ENCODE measurements at regions of chr3 and their contacts with region 1.

Region 1: GRCh38 chr3:132722164-132723024 is at the start of gene NPHP3:
- DNase-seq: peak; percentile 96 to 98
- ATAC-seq: peak; percentile 84 to 87
- H3K4me3 ChIP-seq: peak within 1 kb of the TSS; percentile 77 to 99 (median 88)
- H3K27ac ChIP-seq: peak within 1 kb of the TSS; percentile 83 to 100 (median 94)
- H3K4me1 ChIP-seq: peaks cover 21 to 33% of the 10 kb centered on the region in 2 donors
- H3K27me3 ChIP-seq: no peaks in the 10 kb centered on the region
- CTCF ChIP-seq: peak in 3 of 5 experiments; percentile 12 to 43 (median 19)
- POLR2A ChIP-seq: peak; percentile 87 to 91
- total RNA-seq, gene NPHP3: 6.3 to 13.4 (median 10.6) TPM

Region 2: GRCh38 chr3:131381444-131382291 is 1340.7 kb before region 1 on chr3 and contains the start of gene NUDT16:
- in situ Hi-C with region 1: no loop called
- intact Hi-C with region 1: loop called (anchors 5 kb)
- DNase-seq: peak; percentile 100
- ATAC-seq: peak; percentile 93 to 94
- H3K4me3 ChIP-seq: peak within 1 kb of the TSS; percentile 83 to 97 (median 92)
- H3K27ac ChIP-seq: peak within 1 kb of the TSS; percentile 90 to 94 (median 92)
- H3K4me1 ChIP-seq: peaks cover 28 to 43% of the 10 kb centered on the region in 2 donors
- H3K27me3 ChIP-seq: no peaks in the 10 kb centered on the region
- CTCF ChIP-seq: no peak
- POLR2A ChIP-seq: peak; percentile 82 to 87
- total RNA-seq, gene NUDT16: 10.0 to 18.3 (median 14.4) TPM

Region 3: DNA sequence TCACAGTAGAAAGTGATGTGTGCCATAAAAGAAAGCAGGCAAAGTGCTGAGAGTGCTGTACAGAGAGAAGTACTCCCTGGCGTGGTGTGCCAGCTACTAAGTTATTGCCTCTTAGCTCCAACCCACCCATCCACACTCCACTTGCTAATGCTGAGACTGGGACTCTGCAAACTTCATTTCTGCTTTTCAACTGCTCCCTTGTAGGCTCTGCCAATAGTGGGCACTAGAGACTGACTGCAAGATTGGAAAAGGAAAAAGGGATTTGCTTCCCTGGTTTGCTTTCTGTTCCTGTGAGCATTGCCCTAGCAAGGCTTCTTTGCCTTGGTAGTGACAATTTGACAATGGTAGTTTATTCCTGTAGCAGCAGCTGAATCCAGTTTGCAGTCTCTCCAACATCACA is 259.3 kb after region 1 on chr3:
- in situ Hi-C with region 1: no loop called
- intact Hi-C with region 1: loop called (anchors 1 kb)
- DNase-seq: no peak
- ATAC-seq: no peak
- H3K4me3 ChIP-seq: no peak overlapping the region
- H3K27ac ChIP-seq: peak overlapping the region; percentile 79 to 88 (median 84)
- H3K4me1 ChIP-seq: peaks cover 38 to 39% of the 10 kb centered on the region in 2 donors
- H3K27me3 ChIP-seq: no peaks in the 10 kb centered on the region
- CTCF ChIP-seq: no peak
- POLR2A ChIP-seq: no peak

Region 4: GRCh38 chr3:133384331-133385027 is 662.1 kb after region 1 on chr3:
- in situ Hi-C with region 1: loop called in 2 of 4 experiments (anchors 5 kb)
- intact Hi-C with region 1: no loop called
- DNase-seq: peak in 1 of 2 donors; percentile 35
- ATAC-seq: peak; percentile 81 to 86
- H3K4me3 ChIP-seq: no peak overlapping the region
- H3K27ac ChIP-seq: no peak overlapping the region
- H3K4me1 ChIP-seq: peaks cover 6 to 23% of the 10 kb centered on the region in 2 donors
- H3K27me3 ChIP-seq: no peaks in the 10 kb centered on the region
- CTCF ChIP-seq: peak; percentile 62 to 89 (median 81)
- POLR2A ChIP-seq: no peak

Region 5: GRCh38 chr3:133573054-133573628 is 850.7 kb after region 1 on chr3:
- in situ Hi-C with region 1: loop called (anchors 10 to 25 kb)
- intact Hi-C with region 1: loop called (anchors 2 kb)
- DNase-seq: peak; percentile 100
- ATAC-seq: peak; percentile 89 to 91
- H3K4me3 ChIP-seq: peak overlapping the region; percentile 52 to 82 (median 63)
- H3K27ac ChIP-seq: peak overlapping the region; percentile 96 to 99 (median 98)
- H3K4me1 ChIP-seq: peaks cover 37% of the 10 kb centered on the region in 2 donors
- H3K27me3 ChIP-seq: no peaks in the 10 kb centered on the region
- CTCF ChIP-seq: no peak
- POLR2A ChIP-seq: peak in 1 of 2 donors; percentile 1

Region 6: DNA sequence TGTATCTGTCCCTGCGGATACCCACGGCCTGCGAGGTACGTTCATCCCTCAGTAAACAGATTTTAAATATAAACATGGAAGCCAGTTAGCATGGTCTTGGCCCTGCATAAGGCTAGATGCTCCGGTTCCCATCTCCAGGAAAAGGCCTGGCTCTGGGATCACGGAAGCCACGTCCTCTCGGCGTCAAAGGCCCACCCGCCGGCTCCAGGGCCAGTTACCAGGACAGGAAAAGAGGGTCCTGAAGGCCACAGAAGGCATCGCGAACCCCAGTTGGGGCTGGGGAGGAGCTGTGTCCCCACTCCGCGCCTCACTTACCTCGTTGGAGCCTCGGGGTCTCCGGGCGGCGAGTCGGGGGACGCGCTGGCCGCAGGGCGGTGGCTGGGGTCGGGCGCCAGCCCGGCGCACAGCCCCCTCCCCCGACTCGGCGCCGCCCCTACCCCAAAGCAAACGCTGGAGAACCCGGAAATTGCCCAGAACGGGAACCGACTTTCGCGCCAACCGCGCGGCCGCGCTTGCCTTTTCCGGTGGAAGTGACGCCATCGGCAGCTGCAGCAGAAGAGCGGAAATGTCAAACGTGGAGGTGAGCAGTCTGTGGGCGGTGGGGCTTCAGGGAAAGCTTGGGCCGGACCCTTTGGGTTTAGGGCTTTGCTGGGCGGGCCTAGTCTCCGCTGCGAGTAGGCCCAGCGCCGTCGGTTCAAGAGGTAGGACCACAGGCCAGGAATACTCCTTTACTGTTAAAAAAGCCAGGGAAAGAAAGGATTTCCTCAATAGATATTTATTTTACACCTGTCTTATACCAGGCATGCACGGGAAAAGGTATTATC is 939.3 kb after region 1 on chr3 and contains the start of gene TOPBP1:
- in situ Hi-C with region 1: no loop called
- intact Hi-C with region 1: loop called (anchors 5 kb)
- DNase-seq: peak; percentile 50 to 52
- ATAC-seq: peak; percentile 81 to 88
- H3K4me3 ChIP-seq: peak within 1 kb of the TSS; percentile 73 to 84 (median 80)
- H3K27ac ChIP-seq: peak within 1 kb of the TSS; percentile 70 to 78 (median 74)
- H3K4me1 ChIP-seq: peaks cover 11 to 22% of the 10 kb centered on the region in 2 donors
- H3K27me3 ChIP-seq: no peaks in the 10 kb centered on the region
- CTCF ChIP-seq: no peak
- POLR2A ChIP-seq: no peak
- total RNA-seq, gene TOPBP1: 11.8 to 21.1 (median 16.9) TPM

Region 7: GRCh38 chr3:133927540-133928066 is 1205.2 kb after region 1 on chr3:
- in situ Hi-C with region 1: no loop called
- intact Hi-C with region 1: loop called (anchors 5 kb)
- DNase-seq: no peak
- ATAC-seq: peak; percentile 53 to 80
- H3K4me3 ChIP-seq: peak overlapping the region; percentile 28 to 80 (median 52)
- H3K27ac ChIP-seq: no peak overlapping the region
- H3K4me1 ChIP-seq: peaks cover 0 to 9% of the 10 kb centered on the region in 2 donors
- H3K27me3 ChIP-seq: peaks cover 0 to 2% (median 0%) of the 10 kb centered on the region in 3 donors
- CTCF ChIP-seq: peak; percentile 59 to 89 (median 85)
- POLR2A ChIP-seq: no peak

Region 8: GRCh38 chr3:134078169-134078821 is 1355.9 kb after region 1 on chr3:
- in situ Hi-C with region 1: no loop called
- intact Hi-C with region 1: no loop called
- DNase-seq: peak in 1 of 2 donors; percentile 22
- ATAC-seq: peak; percentile 46 to 56
- H3K4me3 ChIP-seq: no peak overlapping the region
- H3K27ac ChIP-seq: no peak overlapping the region
- H3K4me1 ChIP-seq: no peaks in the 10 kb centered on the region
- H3K27me3 ChIP-seq: no peaks in the 10 kb centered on the region
- CTCF ChIP-seq: no peak
- POLR2A ChIP-seq: no peak

Measured in gastrocnemius medialis (tissue), 4 donors.